Colonic mucosa (tissue), 4 donors: ENCODE measurements at regions of chr10 and their contacts with region 1.

Region 1: GRCh38 chr10:97676770-97677581 is 10.1 kb downstream of the AVPI1 start:
- DNase-seq: no peak
- H3K4me3 ChIP-seq: no peak overlapping the region
- H3K27ac ChIP-seq: no peak overlapping the region
- H3K4me1 ChIP-seq: peaks cover 5% of the 10 kb centered on the region
- H3K27me3 ChIP-seq: no peaks in the 10 kb centered on the region
- CTCF ChIP-seq: peak; percentile 87

Region 2: DNA sequence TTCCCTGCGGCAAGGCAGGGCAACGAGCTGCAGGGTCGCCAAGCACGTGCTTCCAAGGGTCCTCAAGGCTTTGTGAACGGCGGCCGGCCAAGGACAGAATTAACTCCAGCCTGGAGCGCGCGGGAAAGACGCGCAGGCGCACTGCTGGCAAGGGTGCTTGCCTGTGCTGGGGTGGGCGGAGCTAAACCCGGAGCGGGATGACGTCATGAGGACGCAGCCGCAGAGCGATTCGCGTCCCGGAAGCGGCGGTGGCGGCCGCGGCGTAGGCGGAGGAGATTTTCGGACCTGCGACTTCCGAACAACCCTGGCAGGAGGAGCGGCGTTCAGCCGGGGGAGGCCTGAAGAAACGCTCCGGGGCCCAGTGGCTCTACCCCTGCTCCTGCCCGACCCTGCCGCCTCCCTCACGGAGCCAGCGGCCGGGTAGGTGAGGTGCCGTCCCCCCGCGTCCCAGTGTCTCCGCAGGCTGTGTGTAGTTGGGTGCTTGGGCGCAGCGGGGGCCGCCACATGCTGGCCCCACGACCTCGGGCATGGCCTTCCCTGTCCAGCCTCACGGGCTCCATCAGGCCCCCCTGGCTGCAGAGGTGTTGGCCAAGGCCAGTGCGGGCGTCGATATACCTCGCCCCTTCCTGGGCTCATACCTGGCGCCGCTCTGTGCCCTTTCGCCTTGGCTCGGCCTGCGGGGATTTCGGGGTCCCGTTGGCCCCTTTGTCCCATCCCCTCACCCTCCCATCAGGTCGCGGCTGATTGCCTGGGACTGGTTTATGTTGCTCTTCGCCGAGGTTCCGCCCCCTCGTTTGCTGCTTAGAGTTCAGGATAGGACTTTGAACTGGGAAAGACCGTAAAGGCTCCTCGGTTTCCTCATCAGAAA is 60.2 kb after region 1 on chr10 and contains the start of gene ZFYVE27:
- intact Hi-C with region 1: loop called (anchors 10 kb)
- DNase-seq: peak; percentile 97
- H3K4me3 ChIP-seq: peak within 1 kb of the TSS; percentile 93
- H3K27ac ChIP-seq: peak within 1 kb of the TSS; percentile 93
- H3K4me1 ChIP-seq: peaks cover 10% of the 10 kb centered on the region
- H3K27me3 ChIP-seq: no peaks in the 10 kb centered on the region
- CTCF ChIP-seq: no peak
- total RNA-seq, gene ZFYVE27: 45.9 to 47.9 TPM